Activated CD4-positive, alpha-beta memory T cell treated with anti-CD3 and anti-CD28 coated beads for 36 hours (primary cell): ENCODE measurements at regions of chr6 and their contacts with region 1.

Region 1: GRCh38 chr6:119078376-119079282 is at the start of gene FAM184A:
- DNase-seq: peak; percentile 77
- H3K4me3 Mint-ChIP-seq: peak within 1 kb of the TSS; percentile 88
- H3K27ac Mint-ChIP-seq: peak within 1 kb of the TSS; percentile 90
- H3K4me1 Mint-ChIP-seq: peaks cover 46% of the 10 kb centered on the region
- H3K27me3 Mint-ChIP-seq: no peaks in the 10 kb centered on the region
- total RNA-seq, gene FAM184A: 7.6 to 10.8 TPM

Region 2: DNA sequence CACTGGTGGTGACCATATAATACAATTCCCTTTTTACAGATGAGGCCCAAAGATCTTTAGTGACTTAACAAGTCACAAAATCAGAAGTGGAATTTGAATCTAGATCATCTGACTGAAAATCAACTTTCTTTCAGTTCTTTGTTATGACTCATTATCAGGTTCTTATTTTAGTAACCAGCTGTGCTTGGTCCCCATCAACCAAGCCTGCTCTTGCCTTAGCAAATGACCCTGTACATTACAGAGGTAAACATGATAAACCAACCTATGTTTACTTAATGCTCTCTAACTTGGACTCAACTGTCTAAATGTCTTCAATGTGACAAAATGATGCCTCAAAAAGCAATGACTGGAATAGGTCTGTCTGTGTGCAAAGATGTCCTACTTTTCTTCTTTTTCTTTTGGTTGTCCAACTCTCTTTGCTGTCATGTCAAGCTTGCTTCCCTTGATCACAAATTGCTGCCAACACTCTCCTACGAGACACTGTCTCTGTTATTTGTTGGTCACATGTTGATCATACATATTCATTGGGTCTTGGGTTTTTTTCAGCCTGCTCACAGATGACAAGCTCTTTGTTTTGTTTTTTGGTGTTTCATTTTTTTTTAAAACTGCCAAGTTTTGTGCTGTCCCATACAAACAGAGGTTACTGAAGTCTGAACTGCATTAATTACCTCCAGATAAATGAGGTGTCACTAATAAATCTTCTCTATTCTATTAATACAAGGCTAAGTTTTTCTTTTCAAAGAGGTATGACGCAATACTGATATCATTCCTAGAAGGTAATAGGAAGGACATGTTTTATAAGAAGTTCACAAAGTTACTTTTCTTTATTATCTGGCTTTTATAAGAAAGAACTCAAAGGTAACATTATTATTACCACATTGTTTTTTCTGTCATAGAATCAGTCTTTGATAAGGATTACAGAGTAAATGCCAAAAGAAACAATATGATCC is 592.8 kb before region 1 on chr6:
- CTCF ChIA-PET with region 1: no interaction called
- POLR2A ChIA-PET with region 1: no interaction called
- intact Hi-C with region 1: loop called (anchors 10 kb)
- DNase-seq: peak; percentile 18
- H3K4me3 Mint-ChIP-seq: no peak overlapping the region
- H3K27ac Mint-ChIP-seq: no peak overlapping the region
- H3K4me1 Mint-ChIP-seq: peaks cover 23% of the 10 kb centered on the region
- H3K27me3 Mint-ChIP-seq: no peaks in the 10 kb centered on the region

Region 3: DNA sequence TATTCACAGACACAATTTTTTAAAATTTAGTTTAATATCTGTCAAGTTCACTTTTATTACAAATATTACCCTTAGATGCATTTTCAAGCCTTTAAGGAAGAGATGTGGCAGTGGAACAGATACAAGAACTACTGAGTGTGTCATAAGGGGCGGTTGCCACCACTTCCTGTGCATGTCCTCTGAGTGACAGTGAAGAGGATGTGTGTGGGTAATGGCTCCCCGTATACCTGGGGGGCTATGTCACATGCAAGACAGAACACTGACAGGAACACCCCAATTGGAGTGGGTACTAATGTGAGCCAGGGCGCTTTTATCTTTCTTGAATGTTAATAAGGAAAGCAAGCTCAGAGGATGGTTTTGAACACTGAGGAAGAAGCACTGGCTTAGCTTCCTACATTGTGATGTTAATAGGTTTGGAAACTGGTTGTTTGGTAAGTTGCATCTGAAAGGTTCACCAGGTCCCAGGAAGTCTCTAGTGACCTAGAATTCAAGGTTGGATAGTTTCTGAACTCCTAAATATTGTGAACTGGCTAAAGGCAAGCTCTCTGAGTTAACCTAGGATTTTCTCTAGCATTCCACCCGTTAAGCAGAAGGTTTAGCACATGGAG is 268.1 kb before region 1 on chr6:
- CTCF ChIA-PET with region 1: no interaction called
- POLR2A ChIA-PET with region 1: no interaction called
- intact Hi-C with region 1: loop called (anchors 5 kb)
- DNase-seq: peak; percentile 77
- H3K4me3 Mint-ChIP-seq: no peak overlapping the region
- H3K27ac Mint-ChIP-seq: peak overlapping the region; percentile 77
- H3K4me1 Mint-ChIP-seq: peaks cover 55% of the 10 kb centered on the region
- H3K27me3 Mint-ChIP-seq: no peaks in the 10 kb centered on the region

Region 4: GRCh38 chr6:118934461-118935330 is 143.9 kb before region 1 on chr6 and contains the start of gene MCM9:
- CTCF ChIA-PET with region 1: interaction called, 3 read pairs
- POLR2A ChIA-PET with region 1: interaction called, 5 read pairs
- intact Hi-C with region 1: loop called (anchors 1 kb)
- DNase-seq: peak; percentile 94
- H3K4me3 Mint-ChIP-seq: peak within 1 kb of the TSS; percentile 81
- H3K27ac Mint-ChIP-seq: peak within 1 kb of the TSS; percentile 92
- H3K4me1 Mint-ChIP-seq: peaks cover 23% of the 10 kb centered on the region
- H3K27me3 Mint-ChIP-seq: no peaks in the 10 kb centered on the region
- total RNA-seq, gene MCM9: 14.4 to 14.7 TPM

Region 5: GRCh38 chr6:118959903-118960302 is 118.7 kb before region 1 on chr6:
- CTCF ChIA-PET with region 1: no interaction called
- POLR2A ChIA-PET with region 1: no interaction called
- intact Hi-C with region 1: no loop called
- DNase-seq: no peak
- H3K4me3 Mint-ChIP-seq: no peak overlapping the region
- H3K27ac Mint-ChIP-seq: no peak overlapping the region
- H3K4me1 Mint-ChIP-seq: peaks cover 6% of the 10 kb centered on the region
- H3K27me3 Mint-ChIP-seq: no peaks in the 10 kb centered on the region

Region 6: GRCh38 chr6:119052292-119052889 is 26.2 kb before region 1 on chr6:
- CTCF ChIA-PET with region 1: interaction called, 3 read pairs
- POLR2A ChIA-PET with region 1: interaction called, 7 read pairs
- intact Hi-C with region 1: loop called (anchors 1 kb)
- DNase-seq: peak; percentile 76
- H3K4me3 Mint-ChIP-seq: no peak overlapping the region
- H3K27ac Mint-ChIP-seq: no peak overlapping the region
- H3K4me1 Mint-ChIP-seq: peaks cover 20% of the 10 kb centered on the region
- H3K27me3 Mint-ChIP-seq: no peaks in the 10 kb centered on the region

Region 7: GRCh38 chr6:119110601-119111548 is 32.2 kb after region 1 on chr6:
- CTCF ChIA-PET with region 1: interaction called, 15 read pairs
- POLR2A ChIA-PET with region 1: interaction called, 3 read pairs
- intact Hi-C with region 1: loop called (anchors 1 kb)
- DNase-seq: peak; percentile 32
- H3K4me3 Mint-ChIP-seq: no peak overlapping the region
- H3K27ac Mint-ChIP-seq: no peak overlapping the region
- H3K4me1 Mint-ChIP-seq: peaks cover 9% of the 10 kb centered on the region
- H3K27me3 Mint-ChIP-seq: no peaks in the 10 kb centered on the region